ENCODE measurements at regions of chr19 and their contacts with region 1.

Region 1: GRCh38 chr19:49502866-49503581 is 6.8 kb downstream of the RPS11 start:
- DNase-seq: no peak
- H3K4me3 ChIP-seq: no peak overlapping the region
- CTCF ChIP-seq: peak; percentile 57

Region 2: GRCh38 chr19:49512970-49513745 is 10.1 kb after region 1 on chr19:
- CTCF ChIA-PET with region 1: interaction called, 10 read pairs
- POLR2A ChIA-PET with region 1: no interaction called
- DNase-seq: no peak
- H3K4me3 ChIP-seq: peak overlapping the region; percentile 56
- CTCF ChIP-seq: no peak

Region 3: GRCh38 chr19:49533551-49534488 is 30.8 kb after region 1 on chr19:
- CTCF ChIA-PET with region 1: interaction called, 23 read pairs
- POLR2A ChIA-PET with region 1: no interaction called
- DNase-seq: no peak
- H3K4me3 ChIP-seq: peak overlapping the region; percentile 56
- CTCF ChIP-seq: no peak

Region 4: DNA sequence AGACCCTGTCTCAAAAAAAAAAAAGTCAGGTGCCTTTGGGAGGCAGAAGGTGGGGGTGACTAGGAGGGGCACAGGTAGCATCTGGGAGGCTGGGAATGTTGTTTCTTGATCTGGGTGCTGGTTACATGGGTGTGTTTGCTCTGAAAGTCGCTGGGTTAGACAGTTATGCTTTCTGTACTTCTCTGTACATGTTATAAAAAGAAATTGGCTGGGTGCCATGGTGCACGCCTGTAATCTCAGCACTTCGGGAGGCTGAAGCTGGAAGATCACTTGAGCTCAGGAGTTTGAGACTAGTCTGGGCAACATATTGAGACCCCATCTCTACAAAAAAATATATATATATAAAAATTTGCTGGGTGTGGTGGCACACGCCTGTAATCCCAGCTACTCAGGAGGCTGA is 62.2 kb after region 1 on chr19:
- CTCF ChIA-PET with region 1: interaction called, 197 read pairs
- POLR2A ChIA-PET with region 1: interaction called, 3 read pairs
- DNase-seq: no peak
- H3K4me3 ChIP-seq: no peak overlapping the region
- CTCF ChIP-seq: no peak

Region 5: DNA sequence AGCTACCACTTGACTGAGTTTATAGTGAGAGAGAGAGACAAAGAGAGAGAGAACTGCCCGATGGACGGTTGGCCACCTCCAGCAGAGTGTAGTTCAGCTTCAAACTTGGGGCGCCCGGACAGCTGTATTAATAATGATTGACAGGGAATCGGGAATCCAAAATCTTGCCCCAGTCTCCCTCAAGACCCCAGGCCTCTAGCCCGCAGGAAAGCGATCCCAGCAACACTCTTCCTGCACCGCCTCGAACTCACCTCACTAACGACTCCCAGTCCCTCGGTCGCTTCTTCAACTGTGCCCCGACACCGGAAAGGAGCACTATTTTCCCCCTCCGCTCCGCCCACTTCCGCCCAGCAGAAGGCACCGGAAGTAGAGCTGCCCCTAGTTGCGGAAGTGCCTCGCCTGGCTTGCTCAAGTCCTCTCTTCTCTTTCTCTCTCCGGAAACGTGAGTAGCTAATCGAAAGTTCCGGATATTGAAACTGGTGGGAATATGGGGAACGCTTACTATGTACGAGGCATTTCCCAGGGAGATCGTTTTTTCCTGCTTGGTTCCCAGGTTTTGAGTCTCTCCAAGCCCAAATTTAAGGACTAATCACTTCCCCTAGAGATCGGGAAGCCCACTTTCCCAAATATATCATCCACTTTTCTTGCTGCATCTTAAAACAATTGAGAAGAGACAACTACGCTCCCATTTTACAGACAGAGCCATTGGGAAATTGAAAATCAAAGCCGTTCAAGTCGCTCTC is 77.4 kb after region 1 on chr19 and contains the start of gene NOSIP:
- CTCF ChIA-PET with region 1: interaction called, 14 read pairs
- POLR2A ChIA-PET with region 1: no interaction called
- DNase-seq: peak; percentile 84
- H3K4me3 ChIP-seq: peak within 1 kb of the TSS; percentile 84
- CTCF ChIP-seq: no peak